Activated naive CD4-positive, alpha-beta T cell treated with anti-CD3 and anti-CD28 coated beads for 36 hours (primary cell): ENCODE measurements at regions of chr1 and their contacts with region 1.

Region 1: DNA sequence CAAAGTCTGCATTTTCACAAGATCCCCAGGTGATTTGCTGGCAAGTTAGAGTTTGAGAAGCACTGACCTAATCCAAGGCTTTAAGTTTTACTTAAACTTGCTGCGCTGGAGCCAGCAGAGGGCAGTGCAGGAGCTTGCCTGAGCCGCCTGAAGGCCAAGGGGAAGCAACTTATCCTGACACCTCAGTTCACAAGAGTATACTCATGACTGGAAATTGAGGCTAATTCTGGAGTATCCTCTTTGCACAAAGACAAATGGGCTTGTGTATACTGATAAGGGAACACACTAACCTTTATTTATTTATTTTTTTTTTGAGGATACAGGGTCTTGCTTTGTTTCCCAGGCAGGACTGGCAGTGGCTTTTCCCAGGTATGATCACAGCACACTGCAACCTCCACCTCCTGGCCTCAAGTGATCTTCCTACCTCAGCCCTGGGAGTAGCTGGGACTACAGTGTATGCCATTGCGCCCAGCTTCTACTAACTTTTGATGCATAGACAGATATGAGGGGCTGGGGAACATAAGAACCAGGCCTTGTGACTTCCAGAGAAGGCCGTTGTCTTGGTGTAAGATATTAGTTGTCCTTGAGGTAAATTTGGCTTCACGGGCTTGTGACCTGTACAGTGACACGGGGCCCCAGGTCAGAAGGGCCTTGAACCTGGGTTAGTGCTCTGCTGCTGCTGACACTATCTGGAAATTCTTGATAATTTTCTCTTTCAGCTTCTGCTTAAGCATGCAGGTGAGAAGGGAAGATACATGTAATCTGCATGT is 29.0 kb upstream of the SLAMF1 start:
- DNase-seq: peak; percentile 92
- H3K4me3 Mint-ChIP-seq: no peak overlapping the region
- H3K27ac Mint-ChIP-seq: no peak overlapping the region
- H3K4me1 Mint-ChIP-seq: peaks cover 41% of the 10 kb centered on the region
- H3K27me3 Mint-ChIP-seq: no peaks in the 10 kb centered on the region

Region 2: GRCh38 chr1:159009704-159010361 is 1666.0 kb before region 1 on chr1 and contains the start of gene IFI16:
- CTCF ChIA-PET with region 1: no interaction called
- intact Hi-C with region 1: loop called (anchors 10 kb)
- DNase-seq: peak; percentile 82
- H3K4me3 Mint-ChIP-seq: peak within 1 kb of the TSS; percentile 91
- H3K27ac Mint-ChIP-seq: peak within 1 kb of the TSS; percentile 99
- H3K4me1 Mint-ChIP-seq: peaks cover 39% of the 10 kb centered on the region
- H3K27me3 Mint-ChIP-seq: no peaks in the 10 kb centered on the region
- total RNA-seq, gene IFI16: 287 to 288 TPM

Region 3: GRCh38 chr1:160416369-160416768 is 259.5 kb before region 1 on chr1:
- CTCF ChIA-PET with region 1: no interaction called
- intact Hi-C with region 1: no loop called
- DNase-seq: no peak
- H3K4me3 Mint-ChIP-seq: no peak overlapping the region
- H3K27ac Mint-ChIP-seq: no peak overlapping the region
- H3K4me1 Mint-ChIP-seq: no peaks in the 10 kb centered on the region
- H3K27me3 Mint-ChIP-seq: no peaks in the 10 kb centered on the region

Region 4: GRCh38 chr1:160474392-160475242 is 201.2 kb before region 1 on chr1:
- CTCF ChIA-PET with region 1: no interaction called
- intact Hi-C with region 1: loop called (anchors 2 kb)
- DNase-seq: peak; percentile 49
- H3K4me3 Mint-ChIP-seq: no peak overlapping the region
- H3K27ac Mint-ChIP-seq: no peak overlapping the region
- H3K4me1 Mint-ChIP-seq: no peaks in the 10 kb centered on the region
- H3K27me3 Mint-ChIP-seq: no peaks in the 10 kb centered on the region

Region 5: GRCh38 chr1:160637821-160638539 is 37.8 kb before region 1 on chr1:
- CTCF ChIA-PET with region 1: interaction called, 18 read pairs
- intact Hi-C with region 1: no loop called
- DNase-seq: peak; percentile 75
- H3K4me3 Mint-ChIP-seq: peak overlapping the region; percentile 66
- H3K27ac Mint-ChIP-seq: peak overlapping the region; percentile 95
- H3K4me1 Mint-ChIP-seq: peaks cover 92% of the 10 kb centered on the region
- H3K27me3 Mint-ChIP-seq: no peaks in the 10 kb centered on the region

Region 6: GRCh38 chr1:160664573-160665051 is 11.2 kb before region 1 on chr1:
- CTCF ChIA-PET with region 1: interaction called, 8 read pairs
- intact Hi-C with region 1: loop called (anchors 1 kb)
- DNase-seq: peak; percentile 77
- H3K4me3 Mint-ChIP-seq: peak overlapping the region; percentile 54
- H3K27ac Mint-ChIP-seq: peak overlapping the region; percentile 93
- H3K4me1 Mint-ChIP-seq: peaks cover 72% of the 10 kb centered on the region
- H3K27me3 Mint-ChIP-seq: no peaks in the 10 kb centered on the region

Region 7: DNA sequence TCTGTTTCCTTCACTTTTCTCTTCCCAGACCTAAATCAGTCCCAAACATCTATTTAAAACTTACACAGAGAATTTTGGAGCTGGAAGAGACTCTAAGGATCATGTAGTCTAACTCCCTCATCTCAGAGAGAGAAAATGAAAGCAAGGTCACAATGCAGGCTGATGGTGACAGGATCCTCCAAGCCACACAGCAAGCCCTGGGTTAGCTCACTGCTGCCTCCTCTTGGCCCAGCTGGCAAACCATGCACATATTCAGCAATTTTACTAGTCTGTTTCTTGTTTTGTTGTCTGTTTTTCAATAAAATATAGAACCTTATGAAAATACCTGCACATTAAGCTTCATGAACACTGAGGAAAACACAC is 92.5 kb after region 1 on chr1:
- CTCF ChIA-PET with region 1: interaction called, 77 read pairs
- intact Hi-C with region 1: loop called (anchors 1 kb)
- DNase-seq: peak; percentile 96
- H3K4me3 Mint-ChIP-seq: peak overlapping the region; percentile 79
- H3K27ac Mint-ChIP-seq: peak overlapping the region; percentile 99
- H3K4me1 Mint-ChIP-seq: peaks cover 68% of the 10 kb centered on the region
- H3K27me3 Mint-ChIP-seq: no peaks in the 10 kb centered on the region

Region 8: DNA sequence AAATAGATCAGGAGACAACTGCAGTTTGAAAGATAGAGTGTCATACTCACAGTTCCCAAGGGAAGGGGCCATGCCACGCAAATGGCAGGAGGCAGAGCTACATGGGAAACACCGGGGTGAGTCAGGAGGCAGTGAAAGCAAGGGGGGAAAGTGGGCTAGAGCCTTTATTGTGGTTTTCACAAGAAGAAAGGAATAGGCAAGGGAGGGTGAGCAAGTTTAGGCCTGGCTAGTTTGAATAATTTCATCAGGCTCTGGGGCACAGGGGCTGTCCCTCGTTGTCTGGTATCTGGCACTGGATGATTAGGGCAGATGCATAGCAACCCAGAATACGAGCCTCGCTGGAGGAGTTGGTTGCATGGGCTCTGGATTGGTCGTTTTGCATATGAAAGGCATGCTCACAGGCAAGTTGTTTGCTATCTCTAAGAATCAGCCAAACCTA is 295.8 kb after region 1 on chr1:
- CTCF ChIA-PET with region 1: no interaction called
- intact Hi-C with region 1: no loop called
- DNase-seq: peak; percentile 70
- H3K4me3 Mint-ChIP-seq: no peak overlapping the region
- H3K27ac Mint-ChIP-seq: no peak overlapping the region
- H3K4me1 Mint-ChIP-seq: peaks cover 7% of the 10 kb centered on the region
- H3K27me3 Mint-ChIP-seq: no peaks in the 10 kb centered on the region